ENCODE measurements at regions of chr5 and their contacts with region 1.

Region 1: GRCh38 chr5:151447174-151448037 is at the start of gene SLC36A1:
- DNase-seq: peak; percentile 85 to 89 (median 86)
- H3K4me3 ChIP-seq: peak within 1 kb of the TSS; percentile 48 to 97
- H3K4me3 Mint-ChIP-seq: peak within 1 kb of the TSS; percentile 92 to 99 (median 98)
- H3K27ac ChIP-seq: peak within 1 kb of the TSS; percentile 64
- H3K27ac Mint-ChIP-seq: peak within 1 kb of the TSS; percentile 80 to 97 (median 95)
- H3K4me1 ChIP-seq: peaks cover 23% of the 10 kb centered on the region
- H3K4me1 Mint-ChIP-seq: peaks cover 12 to 27% (median 15%) of the 10 kb centered on the region in 4 donors
- H3K27me3 ChIP-seq: peaks cover 3% of the 10 kb centered on the region
- H3K27me3 Mint-ChIP-seq: peaks cover 9 to 16% of the 10 kb centered on the region in 2 donors
- total RNA-seq, gene SLC36A1: 5.2 to 7.8 TPM

Region 2: DNA sequence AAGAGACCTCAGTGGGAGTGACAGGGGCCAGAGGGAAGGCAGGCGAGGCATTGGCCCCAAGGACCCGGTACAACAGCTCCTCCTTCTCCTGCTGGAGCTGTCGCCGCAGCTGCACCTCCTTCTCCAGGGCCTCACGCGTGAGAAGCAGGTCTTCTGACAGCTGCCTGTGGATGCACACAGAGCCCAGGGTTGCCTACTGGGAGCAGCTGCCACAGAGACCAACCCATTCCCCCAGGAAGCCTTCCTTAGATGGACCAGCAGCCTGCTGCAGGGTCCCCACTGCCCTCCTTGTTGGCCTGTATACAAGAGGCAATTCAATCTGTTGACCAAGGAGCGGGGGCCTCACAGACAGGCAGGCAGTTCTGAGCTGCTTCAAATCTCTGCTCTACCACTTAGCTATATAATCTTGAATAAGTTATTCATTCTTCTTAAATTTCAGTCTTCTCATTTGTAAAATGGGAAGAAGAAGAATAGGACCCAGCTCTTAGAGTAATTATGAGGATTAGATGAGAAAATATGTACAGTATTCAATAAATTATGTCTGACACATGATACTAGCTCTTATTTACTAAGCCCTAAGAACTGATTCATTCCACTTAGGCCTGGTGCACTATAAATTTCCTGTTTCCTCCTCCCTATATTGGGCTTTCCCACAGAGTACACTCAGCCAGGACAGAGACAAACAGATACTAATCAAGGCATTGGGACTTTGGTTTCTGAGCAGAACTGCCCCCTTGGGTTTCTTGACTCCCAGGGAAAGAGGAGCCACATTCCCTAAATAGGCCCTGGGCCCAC is 263.8 kb before region 1 on chr5:
- CTCF ChIA-PET with region 1: no interaction called
- POLR2A ChIA-PET with region 1: no interaction called
- intact Hi-C with region 1: no loop called
- DNase-seq: no peak
- H3K4me3 ChIP-seq: no peak overlapping the region
- H3K4me3 Mint-ChIP-seq: no peak overlapping the region
- H3K27ac ChIP-seq: no peak overlapping the region
- H3K27ac Mint-ChIP-seq: peak overlapping the region in 4 of 7 donors; percentile 29 to 63 (median 40)
- H3K4me1 ChIP-seq: no peaks in the 10 kb centered on the region
- H3K4me1 Mint-ChIP-seq: peaks cover 8 to 11% (median 10%) of the 10 kb centered on the region in 4 donors
- H3K27me3 ChIP-seq: no peaks in the 10 kb centered on the region
- H3K27me3 Mint-ChIP-seq: no peaks in the 10 kb centered on the region

Region 3: GRCh38 chr5:151432210-151432609 is 15.2 kb before region 1 on chr5:
- CTCF ChIA-PET with region 1: interaction called, 12 read pairs
- POLR2A ChIA-PET with region 1: no interaction called
- intact Hi-C with region 1: no loop called
- DNase-seq: no peak
- H3K4me3 ChIP-seq: no peak overlapping the region
- H3K4me3 Mint-ChIP-seq: no peak overlapping the region
- H3K27ac ChIP-seq: no peak overlapping the region
- H3K27ac Mint-ChIP-seq: no peak overlapping the region
- H3K4me1 ChIP-seq: no peaks in the 10 kb centered on the region
- H3K4me1 Mint-ChIP-seq: no peaks in the 10 kb centered on the region
- H3K27me3 ChIP-seq: no peaks in the 10 kb centered on the region
- H3K27me3 Mint-ChIP-seq: peaks cover 1 to 8% of the 10 kb centered on the region in 2 donors

Region 4: GRCh38 chr5:151499501-151500035 is 52.2 kb after region 1 on chr5:
- CTCF ChIA-PET with region 1: interaction called, 78 read pairs
- POLR2A ChIA-PET with region 1: no interaction called
- intact Hi-C with region 1: loop called (anchors 1 kb)
- DNase-seq: no peak
- H3K4me3 ChIP-seq: no peak overlapping the region
- H3K4me3 Mint-ChIP-seq: no peak overlapping the region
- H3K27ac ChIP-seq: no peak overlapping the region
- H3K27ac Mint-ChIP-seq: no peak overlapping the region
- H3K4me1 ChIP-seq: peaks cover 7% of the 10 kb centered on the region
- H3K4me1 Mint-ChIP-seq: peaks cover 4 to 7% (median 5%) of the 10 kb centered on the region in 4 donors
- H3K27me3 ChIP-seq: no peaks in the 10 kb centered on the region
- H3K27me3 Mint-ChIP-seq: no peaks in the 10 kb centered on the region

Region 5: DNA sequence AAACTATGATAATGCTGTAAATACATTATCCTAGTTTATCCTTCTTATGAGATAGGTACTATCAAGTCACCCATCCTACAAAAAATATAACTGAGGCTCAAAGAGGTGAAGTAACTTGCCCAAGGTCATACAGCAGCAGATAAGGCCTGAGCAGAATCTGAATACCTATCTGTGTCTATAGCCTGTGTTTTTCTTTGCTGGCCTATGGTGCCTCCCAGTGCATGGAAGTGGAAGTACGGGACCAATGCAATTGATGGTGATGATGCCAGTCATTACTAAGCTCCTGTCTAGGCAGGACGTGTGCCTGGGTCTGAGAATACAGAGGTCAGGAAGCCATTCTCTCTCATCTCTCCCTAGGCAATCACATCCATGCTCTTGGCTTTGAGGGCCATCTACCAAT is 75.9 kb after region 1 on chr5:
- CTCF ChIA-PET with region 1: interaction called, 23 read pairs
- POLR2A ChIA-PET with region 1: no interaction called
- intact Hi-C with region 1: loop called (anchors 1 kb)
- DNase-seq: peak in 4 of 5 donors; percentile 8 to 35 (median 23)
- H3K4me3 ChIP-seq: no peak overlapping the region
- H3K4me3 Mint-ChIP-seq: no peak overlapping the region
- H3K27ac ChIP-seq: no peak overlapping the region
- H3K27ac Mint-ChIP-seq: no peak overlapping the region
- H3K4me1 ChIP-seq: no peaks in the 10 kb centered on the region
- H3K4me1 Mint-ChIP-seq: peaks cover 0 to 8% (median 0%) of the 10 kb centered on the region in 4 donors
- H3K27me3 ChIP-seq: no peaks in the 10 kb centered on the region
- H3K27me3 Mint-ChIP-seq: no peaks in the 10 kb centered on the region

Region 6: GRCh38 chr5:151740336-151740942 is 293.0 kb after region 1 on chr5:
- CTCF ChIA-PET with region 1: interaction called, 10 read pairs
- POLR2A ChIA-PET with region 1: no interaction called
- intact Hi-C with region 1: loop called (anchors 2 kb)
- DNase-seq: peak; percentile 38 to 58 (median 52)
- H3K4me3 ChIP-seq: no peak overlapping the region
- H3K4me3 Mint-ChIP-seq: peak overlapping the region in 1 of 8 donors; percentile 40
- H3K27ac ChIP-seq: no peak overlapping the region
- H3K27ac Mint-ChIP-seq: peak overlapping the region in 4 of 7 donors; percentile 5 to 75 (median 55)
- H3K4me1 ChIP-seq: peaks cover 19% of the 10 kb centered on the region
- H3K4me1 Mint-ChIP-seq: peaks cover 14 to 24% (median 22%) of the 10 kb centered on the region in 4 donors
- H3K27me3 ChIP-seq: no peaks in the 10 kb centered on the region
- H3K27me3 Mint-ChIP-seq: no peaks in the 10 kb centered on the region

Region 7: DNA sequence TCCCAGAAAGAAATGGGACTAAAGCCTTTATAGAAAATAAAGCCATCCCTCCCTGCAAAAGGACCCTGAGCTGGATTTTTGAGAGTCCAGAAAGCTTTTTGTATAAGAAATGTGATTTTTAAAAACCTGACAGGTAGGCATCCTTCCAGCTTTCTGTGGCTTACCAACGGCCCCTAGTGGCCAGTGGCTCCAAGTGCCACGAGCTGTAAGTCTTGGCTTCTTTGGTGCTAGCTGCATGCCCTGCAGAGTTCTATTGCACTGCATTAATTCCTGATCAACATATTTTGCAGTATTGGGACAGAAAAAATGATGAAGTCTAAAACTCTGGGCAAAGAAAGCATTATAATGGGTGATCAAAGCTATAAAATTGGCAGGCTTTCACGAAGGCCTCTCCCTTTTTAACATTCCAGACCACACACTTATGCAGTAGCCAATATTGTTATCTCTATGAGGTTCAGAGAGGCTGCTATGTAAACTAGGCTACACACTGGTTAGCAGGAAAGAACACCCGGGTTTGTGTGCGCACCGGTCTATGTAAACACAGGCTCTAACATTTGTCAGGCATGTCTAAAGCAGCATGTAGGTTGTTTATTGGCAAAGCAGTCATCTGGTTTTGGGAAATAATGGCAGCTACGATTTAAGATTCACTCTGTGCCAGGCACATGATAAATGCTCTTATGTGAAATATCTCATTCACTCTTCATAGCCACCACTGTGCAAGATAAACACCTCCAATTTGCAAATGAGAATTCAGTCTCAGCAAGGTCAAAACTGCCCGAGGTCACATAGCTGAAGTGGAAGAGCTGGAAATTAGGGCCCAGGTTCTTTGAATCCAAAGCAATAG is 902.5 kb after region 1 on chr5:
- CTCF ChIA-PET with region 1: no interaction called
- POLR2A ChIA-PET with region 1: no interaction called
- intact Hi-C with region 1: loop called (anchors 2 kb)
- DNase-seq: peak in 4 of 5 donors; percentile 12 to 30 (median 20)
- H3K4me3 ChIP-seq: no peak overlapping the region
- H3K4me3 Mint-ChIP-seq: no peak overlapping the region
- H3K27ac ChIP-seq: no peak overlapping the region
- H3K27ac Mint-ChIP-seq: no peak overlapping the region
- H3K4me1 ChIP-seq: no peaks in the 10 kb centered on the region
- H3K4me1 Mint-ChIP-seq: no peaks in the 10 kb centered on the region
- H3K27me3 ChIP-seq: no peaks in the 10 kb centered on the region
- H3K27me3 Mint-ChIP-seq: peaks cover 3 to 8% of the 10 kb centered on the region in 2 donors